Activated T-helper 2 cell treated with anti-CD3 and anti-CD28 coated beads, Interferon-gamma antibody, Interleukin-2, Interleukin-4, amounts not matched to agents 10 μg/mL and 5 μg/mL and 100 μg/mL, durations not matched to agents 14 hours and 24 hours and 36 hours (primary cell): ENCODE measurements at regions of chr16 and their contacts with region 1.

Region 1: DNA sequence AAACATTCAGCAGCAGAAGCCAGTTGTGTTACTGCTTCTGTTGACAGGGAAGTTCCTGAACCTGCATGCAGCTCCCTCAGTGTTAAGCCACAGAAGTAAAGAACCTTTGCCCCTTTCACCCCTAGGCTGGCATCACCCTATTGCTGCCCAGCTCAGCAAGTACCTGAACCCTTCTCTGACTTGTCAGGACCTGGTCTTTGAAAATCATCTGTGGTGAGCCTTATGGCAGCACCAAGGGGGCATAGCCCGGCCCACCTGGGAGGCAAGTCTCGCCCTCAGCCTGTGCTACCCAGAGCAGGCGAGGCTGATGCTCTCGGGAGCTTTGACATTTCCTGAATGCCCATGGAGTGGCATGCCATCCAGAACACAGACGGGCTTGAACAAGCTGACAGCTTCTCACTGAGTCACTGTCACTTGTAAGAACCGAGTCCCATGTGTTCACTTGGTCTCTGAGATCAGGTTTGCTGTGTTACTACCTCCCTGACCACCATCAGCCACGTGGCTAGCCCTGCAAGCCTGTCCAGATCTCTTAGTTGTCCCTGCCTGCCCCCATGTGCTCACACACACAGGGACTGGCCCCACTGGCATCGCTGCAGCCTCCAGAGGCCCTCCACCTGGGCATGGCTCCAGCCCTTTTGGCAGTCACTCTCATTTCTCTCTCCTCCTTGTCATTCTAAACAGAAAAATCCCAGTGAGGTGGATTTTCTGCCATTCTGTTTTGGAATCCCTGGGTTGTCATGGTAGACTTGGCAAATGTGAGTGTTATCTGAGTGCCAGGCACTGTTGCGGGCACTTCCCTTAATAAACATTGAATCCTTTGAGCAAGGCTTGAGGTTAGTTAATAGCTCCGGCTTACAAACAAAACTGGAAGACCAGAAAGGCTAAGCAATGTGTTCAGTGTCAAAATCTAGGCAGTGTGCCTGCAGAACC is 2.9 kb upstream of the CARMIL2 start:
- DNase-seq: no peak
- H3K4me3 Mint-ChIP-seq: no peak overlapping the region
- H3K27ac Mint-ChIP-seq: no peak overlapping the region
- H3K4me1 Mint-ChIP-seq: peaks cover 6% of the 10 kb centered on the region
- H3K27me3 Mint-ChIP-seq: no peaks in the 10 kb centered on the region

Region 2: DNA sequence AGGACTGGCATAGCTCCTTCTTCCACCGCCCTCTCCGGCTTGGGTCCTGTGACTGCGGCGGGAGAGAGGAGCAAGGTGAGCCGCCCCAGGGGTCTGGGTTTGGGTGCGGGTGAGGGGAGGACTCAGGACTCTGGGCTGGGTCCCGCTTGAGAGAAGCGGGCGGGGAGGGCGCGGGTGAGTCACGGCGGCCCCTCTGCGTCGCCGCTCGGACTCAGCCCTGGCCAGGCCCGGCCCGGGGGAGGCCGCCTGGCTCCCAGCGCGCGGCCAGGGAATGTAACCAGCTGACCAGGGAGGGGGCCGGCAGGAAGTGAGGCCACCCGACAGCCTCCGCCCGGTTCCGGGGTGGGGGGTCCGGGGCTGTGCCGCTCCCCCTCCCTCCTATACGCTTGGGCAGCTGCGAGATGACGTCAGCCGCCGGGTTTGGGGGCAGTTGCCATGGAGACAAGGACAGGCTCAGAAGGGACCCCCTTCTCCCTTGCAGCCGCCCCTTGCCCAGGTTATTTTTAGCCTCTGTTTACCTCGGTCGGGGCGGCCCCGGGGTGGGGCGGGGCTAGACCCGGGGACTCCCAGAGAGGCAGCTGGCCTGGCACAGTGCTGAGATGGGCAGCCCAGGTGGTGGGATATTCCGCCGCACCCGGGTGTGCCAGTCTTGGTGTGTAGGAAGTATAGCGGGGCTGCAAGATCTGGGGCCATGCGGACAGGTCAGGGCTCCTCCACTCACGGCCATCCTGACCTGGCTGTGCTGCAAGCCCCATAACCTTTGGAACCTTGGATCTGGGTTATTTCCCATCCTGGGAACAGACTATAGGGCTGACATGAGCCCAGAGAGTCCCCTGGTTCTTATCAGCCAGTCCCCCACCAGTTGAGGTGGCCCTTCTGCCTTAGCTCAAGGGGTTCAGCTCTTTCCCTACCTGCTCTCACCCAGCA is 111.8 kb before region 1 on chr16:
- intact Hi-C with region 1: no loop called
- DNase-seq: no peak
- H3K4me3 Mint-ChIP-seq: peak overlapping the region; percentile 73
- H3K27ac Mint-ChIP-seq: no peak overlapping the region
- H3K4me1 Mint-ChIP-seq: peaks cover 10% of the 10 kb centered on the region
- H3K27me3 Mint-ChIP-seq: peaks cover 33% of the 10 kb centered on the region

Region 3: GRCh38 chr16:67546761-67547422 is 95.2 kb before region 1 on chr16:
- intact Hi-C with region 1: loop called (anchors 1 kb)
- DNase-seq: peak; percentile 62
- H3K4me3 Mint-ChIP-seq: peak overlapping the region; percentile 13
- H3K27ac Mint-ChIP-seq: peak overlapping the region; percentile 81
- H3K4me1 Mint-ChIP-seq: peaks cover 28% of the 10 kb centered on the region
- H3K27me3 Mint-ChIP-seq: no peaks in the 10 kb centered on the region

Region 4: DNA sequence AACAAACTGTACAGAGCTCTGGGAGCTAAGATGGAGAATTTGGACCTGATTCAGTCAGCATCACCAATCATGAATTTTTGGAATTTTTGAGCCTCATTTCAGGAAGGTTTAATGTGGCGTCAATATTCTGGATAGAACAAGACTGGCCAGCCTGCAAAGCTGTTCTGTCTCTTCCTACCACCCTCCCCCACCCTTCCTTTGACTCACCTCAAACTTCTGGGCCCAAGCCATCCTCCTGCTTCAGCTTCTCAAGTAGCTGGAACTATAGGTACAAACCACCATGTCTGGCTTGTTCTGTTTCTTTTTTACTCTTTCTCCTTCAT is 47.0 kb before region 1 on chr16:
- intact Hi-C with region 1: loop called (anchors 5 kb)
- DNase-seq: no peak
- H3K4me3 Mint-ChIP-seq: no peak overlapping the region
- H3K27ac Mint-ChIP-seq: peak overlapping the region; percentile 59
- H3K4me1 Mint-ChIP-seq: peaks cover 33% of the 10 kb centered on the region
- H3K27me3 Mint-ChIP-seq: no peaks in the 10 kb centered on the region